Activated naive CD4-positive, alpha-beta T cell treated with anti-CD3 and anti-CD28 coated beads for 36 hours (primary cell): ENCODE measurements at regions of chr3 and their contacts with region 1.

Region 1: DNA sequence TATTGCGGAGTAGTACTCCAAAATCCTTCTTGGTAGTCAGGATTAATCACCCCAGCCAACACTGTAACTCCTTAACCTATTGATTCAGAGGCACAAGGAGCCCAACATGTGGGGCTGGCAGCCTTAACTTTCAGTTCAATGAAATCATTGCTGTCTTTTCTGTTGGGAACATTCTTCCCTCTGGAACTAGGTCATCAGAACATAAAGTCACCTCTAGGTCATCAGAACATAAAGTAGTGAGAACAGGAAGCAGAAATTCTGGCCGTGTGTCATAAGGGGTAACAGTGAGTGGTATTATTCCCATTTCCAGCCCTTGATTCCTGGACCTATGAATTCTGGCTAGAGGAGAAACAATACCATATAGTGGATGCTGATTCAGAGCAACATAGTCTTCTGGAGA is 71.5 kb upstream of the TNIK start:
- DNase-seq: no peak
- H3K4me3 Mint-ChIP-seq: no peak overlapping the region
- H3K27ac Mint-ChIP-seq: no peak overlapping the region
- H3K4me1 Mint-ChIP-seq: no peaks in the 10 kb centered on the region
- H3K27me3 Mint-ChIP-seq: no peaks in the 10 kb centered on the region

Region 2: DNA sequence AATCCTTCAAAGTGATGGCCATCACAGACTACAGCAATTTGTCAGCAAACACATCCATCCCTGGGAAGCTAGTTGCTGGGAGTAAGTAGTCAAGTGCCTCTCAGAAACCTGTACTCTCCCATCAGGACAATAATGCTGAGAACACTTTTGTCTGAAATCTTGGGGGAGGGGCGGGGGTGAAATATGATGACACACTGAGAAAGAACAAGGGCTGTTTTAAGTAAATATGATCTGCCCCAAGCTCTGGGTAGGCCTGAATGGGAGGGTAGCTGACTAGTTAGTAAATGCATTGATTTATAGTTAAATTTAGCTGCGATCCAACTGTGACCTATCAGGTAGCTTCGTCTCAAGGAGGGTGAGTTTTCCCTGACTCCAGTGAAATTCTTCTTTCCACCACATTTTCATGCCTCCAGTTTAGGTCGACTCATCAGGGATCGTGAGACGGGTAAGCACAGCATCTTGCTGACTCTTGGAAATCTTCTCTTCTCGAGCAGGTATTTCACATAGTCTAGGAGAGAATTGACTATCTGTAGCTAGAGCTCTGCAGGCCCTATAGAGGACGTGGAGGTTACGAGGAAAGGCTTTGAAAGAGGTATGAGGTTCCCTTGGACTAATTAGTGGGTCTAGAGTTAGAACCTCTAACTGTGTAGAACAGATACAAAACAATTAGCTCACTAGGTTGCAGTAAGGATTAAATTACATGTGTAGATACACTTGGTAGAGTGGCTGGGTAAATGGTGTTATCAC is 291.8 kb before region 1 on chr3:
- CTCF ChIA-PET with region 1: no interaction called
- intact Hi-C with region 1: no loop called
- DNase-seq: no peak
- H3K4me3 Mint-ChIP-seq: no peak overlapping the region
- H3K27ac Mint-ChIP-seq: no peak overlapping the region
- H3K4me1 Mint-ChIP-seq: peaks cover 19% of the 10 kb centered on the region
- H3K27me3 Mint-ChIP-seq: no peaks in the 10 kb centered on the region

Region 3: GRCh38 chr3:171511450-171511849 is 20.3 kb before region 1 on chr3:
- CTCF ChIA-PET with region 1: interaction called, 3 read pairs
- intact Hi-C with region 1: loop called (anchors 1 kb)
- DNase-seq: no peak
- H3K4me3 Mint-ChIP-seq: no peak overlapping the region
- H3K27ac Mint-ChIP-seq: no peak overlapping the region
- H3K4me1 Mint-ChIP-seq: no peaks in the 10 kb centered on the region
- H3K27me3 Mint-ChIP-seq: no peaks in the 10 kb centered on the region